ENCODE measurements at regions of chr1 and their contacts with region 1.

Region 1: GRCh38 chr1:28877132-28877781 is 37.1 kb upstream of the EPB41 start:
- DNase-seq: peak; percentile 63
- ATAC-seq: peak; percentile 78
- H3K4me3 Mint-ChIP-seq: no peak overlapping the region
- H3K27ac Mint-ChIP-seq: no peak overlapping the region
- H3K4me1 Mint-ChIP-seq: peaks cover 7% of the 10 kb centered on the region
- H3K27me3 Mint-ChIP-seq: peaks cover 2% of the 10 kb centered on the region
- CTCF ChIP-seq: peak; percentile 88

Region 2: GRCh38 chr1:27071049-27071416 is 1806.2 kb before region 1 on chr1:
- CTCF ChIA-PET with region 1: no interaction called
- POLR2A ChIA-PET with region 1: no interaction called
- intact Hi-C with region 1: no loop called
- DNase-seq: no peak
- ATAC-seq: no peak
- H3K4me3 Mint-ChIP-seq: no peak overlapping the region
- H3K27ac Mint-ChIP-seq: no peak overlapping the region
- H3K4me1 Mint-ChIP-seq: no peaks in the 10 kb centered on the region
- H3K27me3 Mint-ChIP-seq: peaks cover 14% of the 10 kb centered on the region
- CTCF ChIP-seq: no peak

Region 3: GRCh38 chr1:28359592-28360239 is 517.5 kb before region 1 on chr1:
- CTCF ChIA-PET with region 1: interaction called, 68 read pairs
- POLR2A ChIA-PET with region 1: no interaction called
- intact Hi-C with region 1: loop called (anchors 1 kb)
- DNase-seq: peak; percentile 50
- ATAC-seq: peak; percentile 75
- H3K4me3 Mint-ChIP-seq: no peak overlapping the region
- H3K27ac Mint-ChIP-seq: no peak overlapping the region
- H3K4me1 Mint-ChIP-seq: peaks cover 2% of the 10 kb centered on the region
- H3K27me3 Mint-ChIP-seq: no peaks in the 10 kb centered on the region
- CTCF ChIP-seq: peak; percentile 91

Region 4: DNA sequence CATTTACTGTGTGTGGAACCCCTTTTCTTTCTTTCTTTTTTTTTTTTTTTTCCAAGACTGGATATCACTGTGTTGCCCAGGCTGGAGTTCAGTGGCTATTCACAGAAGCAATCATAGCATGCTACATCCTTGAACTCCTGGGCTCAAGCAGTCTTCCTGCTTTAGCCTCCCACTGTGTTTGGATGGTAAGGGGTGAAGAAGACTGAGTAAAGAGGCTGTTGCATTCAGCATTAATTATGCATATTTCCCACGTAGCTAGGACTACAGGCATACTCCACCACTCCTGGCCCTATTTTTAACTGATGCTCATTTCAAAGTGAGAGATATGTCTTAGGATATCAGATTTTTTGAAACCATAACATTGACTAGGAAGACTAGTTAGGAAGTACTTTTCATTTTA is 468.2 kb before region 1 on chr1:
- CTCF ChIA-PET with region 1: interaction called, 13 read pairs
- POLR2A ChIA-PET with region 1: no interaction called
- intact Hi-C with region 1: loop called (anchors 1 kb)
- DNase-seq: no peak
- ATAC-seq: no peak
- H3K4me3 Mint-ChIP-seq: no peak overlapping the region
- H3K27ac Mint-ChIP-seq: no peak overlapping the region
- H3K4me1 Mint-ChIP-seq: peaks cover 7% of the 10 kb centered on the region
- H3K27me3 Mint-ChIP-seq: no peaks in the 10 kb centered on the region
- CTCF ChIP-seq: no peak

Region 5: DNA sequence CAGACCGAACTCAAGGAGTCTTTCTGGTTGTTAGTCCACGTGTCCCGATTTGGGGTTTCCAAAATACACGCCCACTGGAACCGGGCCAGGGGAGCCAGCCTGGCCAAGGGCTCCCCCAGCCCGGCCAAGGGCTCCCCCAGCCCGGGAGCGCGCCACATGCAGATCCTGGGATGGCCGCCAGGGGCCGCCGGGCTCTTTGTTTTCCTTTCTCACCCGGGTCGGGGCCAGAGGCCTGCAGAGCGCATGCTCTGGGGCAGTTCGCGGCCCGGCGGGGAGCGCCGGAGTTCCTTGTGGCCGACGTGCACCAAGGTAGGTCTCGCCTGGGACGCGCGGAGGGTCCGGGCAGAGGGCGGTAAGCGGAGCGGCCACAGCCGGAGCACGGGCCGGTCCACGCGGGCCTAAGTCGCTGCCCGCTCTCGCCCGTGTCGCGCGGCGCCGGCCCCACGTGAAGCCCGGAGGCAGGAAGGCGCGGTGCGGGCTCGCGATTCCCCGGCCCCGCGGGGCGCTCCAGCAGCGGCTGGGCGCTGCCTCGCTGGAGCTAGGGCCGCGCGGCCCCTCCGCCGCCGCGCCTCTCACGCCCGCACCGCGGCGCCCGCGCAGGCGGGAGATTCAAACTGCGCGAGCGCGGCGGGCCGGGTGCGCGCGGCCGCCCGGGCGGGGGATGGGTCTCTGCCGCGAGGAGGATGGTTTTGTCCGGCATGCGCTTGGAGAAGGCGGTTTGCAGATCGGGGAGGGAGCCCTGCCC is 359.1 kb before region 1 on chr1:
- CTCF ChIA-PET with region 1: interaction called, 8 read pairs
- POLR2A ChIA-PET with region 1: interaction called, 4 read pairs
- intact Hi-C with region 1: loop called (anchors 1 kb)
- DNase-seq: peak; percentile 89
- ATAC-seq: peak; percentile 88
- H3K4me3 Mint-ChIP-seq: peak overlapping the region; percentile 90
- H3K27ac Mint-ChIP-seq: peak overlapping the region; percentile 73
- H3K4me1 Mint-ChIP-seq: peaks cover 28% of the 10 kb centered on the region
- H3K27me3 Mint-ChIP-seq: no peaks in the 10 kb centered on the region
- CTCF ChIP-seq: no peak

Region 6: DNA sequence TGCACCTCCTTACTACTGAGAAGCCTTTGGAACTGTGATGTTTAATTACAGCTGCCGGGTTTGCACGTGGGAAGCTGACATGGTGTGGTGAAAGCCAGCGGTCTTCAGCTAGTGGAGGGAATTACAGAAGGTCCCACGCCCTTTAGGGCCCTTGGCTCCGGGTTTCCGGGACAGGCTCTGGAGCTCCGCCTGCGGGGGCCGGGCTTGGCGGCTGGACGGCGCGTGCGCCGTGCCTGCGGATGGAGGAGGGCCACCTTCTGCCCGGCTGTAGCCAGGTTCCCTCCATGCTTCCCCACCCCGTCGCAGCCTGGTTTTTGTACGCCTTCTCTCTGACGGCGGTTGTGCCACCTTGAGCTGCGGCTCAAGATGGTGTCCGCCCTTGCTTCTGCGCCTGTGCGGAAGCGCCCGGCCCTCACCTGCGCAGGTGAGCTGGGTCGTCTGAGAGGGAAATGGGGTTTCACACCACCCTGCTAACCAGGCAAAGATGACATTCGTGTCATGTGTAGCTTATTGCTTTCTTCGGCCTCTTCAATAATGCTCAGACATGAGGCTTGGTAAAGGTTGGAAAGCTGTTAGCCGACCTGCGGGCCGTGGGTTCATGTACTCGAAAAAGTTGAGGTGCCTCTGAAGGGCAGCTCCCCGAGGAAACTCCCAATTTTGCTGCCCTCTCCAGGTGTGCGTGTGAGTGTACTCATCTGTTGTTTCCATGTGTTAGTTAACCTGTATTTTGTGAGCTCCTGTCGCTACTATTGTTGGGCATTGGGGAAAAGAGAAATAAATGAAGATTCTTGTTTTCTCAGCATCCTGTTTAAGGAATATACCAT is 101.9 kb before region 1 on chr1:
- CTCF ChIA-PET with region 1: interaction called, 12 read pairs
- POLR2A ChIA-PET with region 1: no interaction called
- intact Hi-C with region 1: no loop called
- DNase-seq: peak; percentile 62
- ATAC-seq: peak; percentile 95
- H3K4me3 Mint-ChIP-seq: peak overlapping the region; percentile 87
- H3K27ac Mint-ChIP-seq: peak overlapping the region; percentile 61
- H3K4me1 Mint-ChIP-seq: peaks cover 10% of the 10 kb centered on the region
- H3K27me3 Mint-ChIP-seq: no peaks in the 10 kb centered on the region
- CTCF ChIP-seq: no peak

Region 7: DNA sequence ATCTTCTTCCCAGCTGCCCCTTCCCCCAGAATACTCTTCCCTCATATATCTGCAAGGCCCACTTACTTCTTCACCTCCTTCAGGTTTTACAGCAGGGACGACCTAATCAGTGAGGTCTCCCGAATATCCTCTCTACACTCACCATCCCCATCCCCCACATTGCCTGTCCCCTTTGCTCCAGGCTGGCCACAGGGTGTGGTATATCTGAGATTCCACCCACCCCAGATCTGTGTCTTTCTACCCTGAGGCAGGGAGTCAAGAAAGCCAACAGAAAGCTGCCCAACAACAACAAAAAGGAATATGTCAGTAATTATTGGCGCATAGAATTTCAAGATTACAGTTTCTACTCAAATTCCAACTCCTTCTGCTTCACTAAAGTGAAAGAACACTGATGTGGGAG is 95.2 kb before region 1 on chr1:
- CTCF ChIA-PET with region 1: interaction called, 135 read pairs
- POLR2A ChIA-PET with region 1: interaction called, 14 read pairs
- intact Hi-C with region 1: loop called (anchors 1 kb)
- DNase-seq: no peak
- ATAC-seq: no peak
- H3K4me3 Mint-ChIP-seq: no peak overlapping the region
- H3K27ac Mint-ChIP-seq: no peak overlapping the region
- H3K4me1 Mint-ChIP-seq: peaks cover 6% of the 10 kb centered on the region
- H3K27me3 Mint-ChIP-seq: no peaks in the 10 kb centered on the region
- CTCF ChIP-seq: no peak

Region 8: DNA sequence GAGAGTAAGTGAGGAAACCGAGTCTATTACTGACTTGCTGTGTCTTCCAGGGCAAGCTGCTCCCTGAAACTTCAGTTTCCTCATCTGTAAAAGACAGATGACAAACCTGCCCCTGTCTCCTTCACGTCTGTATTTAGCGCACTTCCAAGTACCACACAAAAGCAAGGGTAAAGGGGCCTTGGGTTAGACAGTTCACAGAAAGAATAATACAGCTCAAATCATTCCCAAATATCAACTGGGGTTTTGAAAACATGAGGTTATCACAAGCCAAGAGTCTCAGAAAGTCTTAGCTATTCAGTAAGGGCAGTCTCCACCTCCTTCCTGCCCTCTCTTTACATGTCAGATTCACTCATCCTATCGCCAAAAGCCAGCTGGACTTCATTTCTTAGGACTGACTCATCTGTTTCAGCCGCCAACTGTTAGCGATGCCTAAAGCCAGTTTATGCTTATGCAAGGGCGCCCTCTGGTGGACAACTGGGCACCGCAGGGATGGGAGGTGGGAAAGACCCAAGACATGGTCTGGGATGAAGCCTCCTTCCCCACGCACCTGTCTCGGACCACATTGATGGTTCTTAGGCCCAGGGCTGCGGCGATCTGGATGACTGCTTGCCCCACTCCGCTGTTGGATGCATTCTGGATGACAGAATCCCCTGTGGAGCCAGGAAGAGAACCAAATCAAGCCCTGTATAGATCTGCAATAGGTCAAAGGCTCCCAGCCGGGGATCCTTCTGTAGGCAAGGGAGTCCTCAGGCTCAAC is 325.5 kb after region 1 on chr1:
- CTCF ChIA-PET with region 1: interaction called, 40 read pairs
- POLR2A ChIA-PET with region 1: interaction called, 3 read pairs
- intact Hi-C with region 1: loop called (anchors 1 kb)
- DNase-seq: peak; percentile 80
- ATAC-seq: peak; percentile 98
- H3K4me3 Mint-ChIP-seq: no peak overlapping the region
- H3K27ac Mint-ChIP-seq: no peak overlapping the region
- H3K4me1 Mint-ChIP-seq: peaks cover 3% of the 10 kb centered on the region
- H3K27me3 Mint-ChIP-seq: no peaks in the 10 kb centered on the region
- CTCF ChIP-seq: no peak